ENCODE measurements at regions of chr5 and their contacts with region 1.

Region 1: DNA sequence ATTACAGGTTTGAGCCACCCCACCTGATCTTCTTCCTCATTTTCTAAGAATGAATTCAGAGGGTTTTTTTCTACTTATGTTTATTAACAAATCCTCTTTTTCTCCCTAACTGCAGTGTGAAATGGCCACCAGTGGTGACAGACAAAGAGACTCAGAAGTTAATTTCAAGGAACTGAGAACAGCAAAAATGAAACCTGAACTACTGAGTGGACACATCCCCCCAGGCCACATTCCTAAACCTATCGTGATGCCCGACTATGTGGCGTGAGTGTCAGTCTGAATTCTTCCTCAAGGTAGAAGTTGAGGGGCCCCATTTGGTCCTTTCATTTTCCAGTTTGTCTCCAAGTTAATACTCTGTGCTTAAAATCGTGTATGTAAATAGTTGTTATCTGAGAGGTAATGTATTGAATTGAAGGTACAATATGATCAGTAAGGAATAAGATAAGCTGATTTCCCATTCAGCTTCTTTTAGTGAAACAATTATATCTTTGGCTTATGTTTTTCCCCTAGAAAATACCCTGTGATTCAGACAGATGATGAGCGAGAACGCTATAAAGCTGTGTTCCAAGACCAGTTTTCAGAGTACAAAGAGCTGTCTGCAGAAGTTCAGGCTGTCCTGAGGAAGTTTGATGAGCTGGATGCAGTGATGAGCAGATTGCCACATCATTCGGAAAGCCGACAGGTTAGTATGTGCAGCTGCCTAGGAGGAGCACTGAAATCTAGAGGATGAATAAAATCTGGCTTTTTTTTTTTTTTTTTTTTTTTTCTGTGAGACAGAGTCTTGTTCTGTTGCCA is 17.7 kb downstream of the MARVELD2 start:
- DNase-seq: no peak
- ATAC-seq: no peak
- H3K4me3 ChIP-seq: no peak overlapping the region
- H3K27ac ChIP-seq: no peak overlapping the region
- H3K4me1 ChIP-seq: no peaks in the 10 kb centered on the region
- H3K27me3 ChIP-seq: no peaks in the 10 kb centered on the region
- CTCF ChIP-seq: no peak

Region 2: DNA sequence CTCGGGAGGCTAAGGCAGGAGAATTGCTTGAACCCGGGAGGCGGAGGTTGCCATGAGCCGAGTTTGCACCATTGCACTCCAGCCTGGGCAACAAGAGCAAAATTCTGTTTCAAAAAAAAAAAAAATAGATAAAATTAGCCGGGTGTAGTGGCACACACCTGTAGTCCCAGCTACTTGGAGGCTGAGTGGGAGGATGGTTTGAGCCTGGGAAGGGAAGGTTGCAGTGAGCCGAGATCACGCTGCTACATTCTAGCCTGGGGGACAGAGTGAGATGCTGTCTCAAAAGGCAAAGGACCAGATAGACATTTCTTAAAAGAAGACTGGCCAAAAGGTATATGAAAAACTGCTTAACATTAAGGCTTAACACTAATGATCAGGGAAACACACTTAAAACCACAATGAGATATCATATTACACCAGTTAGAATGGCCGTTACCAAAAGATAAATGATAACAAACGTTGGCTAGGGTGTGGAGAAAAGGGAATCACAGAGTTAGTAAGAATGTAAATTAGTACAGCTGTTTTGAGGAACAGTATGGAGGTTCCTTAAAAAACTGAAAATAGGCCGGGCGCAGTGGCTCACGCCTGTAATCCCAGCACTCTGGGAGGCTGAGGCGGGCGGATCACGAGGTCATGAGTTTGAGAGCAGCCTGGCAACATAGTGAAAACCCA is 27.8 kb before region 1 on chr5:
- CTCF ChIA-PET with region 1: interaction called, 15 read pairs
- POLR2A ChIA-PET with region 1: no interaction called
- in situ Hi-C with region 1: no loop called
- intact Hi-C with region 1: no loop called
- DNase-seq: no peak
- ATAC-seq: no peak
- H3K4me3 ChIP-seq: no peak overlapping the region
- H3K27ac ChIP-seq: no peak overlapping the region
- H3K4me1 ChIP-seq: no peaks in the 10 kb centered on the region
- H3K27me3 ChIP-seq: no peaks in the 10 kb centered on the region
- CTCF ChIP-seq: no peak

Measured in Panc1 (cell line).